Panc1 (cell line): ENCODE measurements at regions of chr17 and their contacts with region 1.

Region 1: GRCh38 chr17:55816532-55817396 is 65.9 kb downstream of the PCTP start:
- DNase-seq: no peak
- ATAC-seq: no peak
- H3K4me3 ChIP-seq: no peak overlapping the region
- H3K27ac ChIP-seq: no peak overlapping the region
- H3K4me1 ChIP-seq: no peaks in the 10 kb centered on the region
- H3K27me3 ChIP-seq: no peaks in the 10 kb centered on the region
- CTCF ChIP-seq: no peak

Region 2: DNA sequence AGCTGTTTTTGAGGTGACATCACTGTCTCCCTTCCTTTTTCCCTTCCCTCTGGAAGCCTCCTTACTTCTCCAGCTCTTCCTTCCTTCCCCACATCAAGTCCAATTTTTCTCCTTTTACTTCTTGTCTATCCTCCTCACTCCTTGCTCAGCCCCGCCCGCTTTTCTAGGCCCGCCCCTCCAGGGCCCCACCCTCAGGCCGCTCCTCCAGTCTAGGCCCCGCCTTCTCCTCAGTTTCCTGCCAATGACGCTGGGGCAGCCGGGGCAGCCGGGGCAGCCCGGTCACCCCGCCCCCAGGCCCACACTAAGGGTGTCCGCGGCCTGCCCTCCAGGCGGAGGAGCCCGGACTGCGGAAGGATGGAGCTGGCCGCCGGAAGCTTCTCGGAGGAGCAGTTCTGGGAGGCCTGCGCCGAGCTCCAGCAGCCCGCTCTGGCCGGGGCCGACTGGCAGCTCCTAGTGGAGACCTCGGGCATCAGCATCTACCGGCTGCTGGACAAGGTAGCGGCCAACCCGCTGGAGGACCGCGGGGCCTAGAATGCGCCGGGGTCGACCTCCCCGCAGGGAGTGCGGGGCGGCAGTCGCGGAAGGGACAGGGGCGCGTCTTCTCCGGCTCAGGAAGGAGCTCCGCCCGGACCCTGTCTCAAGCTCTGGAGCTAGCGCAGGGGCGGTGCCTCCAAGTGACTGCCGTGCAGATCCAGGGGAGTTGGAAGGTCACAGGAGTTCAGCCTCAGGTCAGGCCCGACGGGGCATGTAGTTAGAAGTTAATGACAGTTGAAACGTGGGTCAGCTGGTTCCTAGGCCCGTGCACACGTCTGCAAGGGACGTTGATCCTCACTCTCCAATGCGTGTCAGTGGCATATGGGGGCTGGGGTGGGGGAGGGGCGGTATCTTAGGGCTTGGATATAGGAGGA is 65.8 kb before region 1 on chr17 and contains the start of gene PCTP:
- CTCF ChIA-PET with region 1: no interaction called
- POLR2A ChIA-PET with region 1: interaction called, 12 read pairs
- in situ Hi-C with region 1: no loop called
- intact Hi-C with region 1: no loop called
- DNase-seq: no peak
- ATAC-seq: peak; percentile 100
- H3K4me3 ChIP-seq: peak within 1 kb of the TSS; percentile 77 to 78
- H3K27ac ChIP-seq: peak within 1 kb of the TSS; percentile 73
- H3K4me1 ChIP-seq: peaks cover 5% of the 10 kb centered on the region; the same call in 1 of the 2 replicates
- H3K27me3 ChIP-seq: no peaks in the 10 kb centered on the region
- CTCF ChIP-seq: peak; percentile 59
- total RNA-seq, gene PCTP: 23.7 TPM